Activated naive CD4-positive, alpha-beta T cell treated with anti-CD3 and anti-CD28 coated beads for 36 hours (primary cell): ENCODE measurements at regions of chrX and their contacts with region 1.

Region 1: GRCh38 chrX:119791438-119792231 is at the start of gene RPL39:
- DNase-seq: peak; percentile 82
- H3K4me3 Mint-ChIP-seq: peak within 1 kb of the TSS; percentile 86
- H3K27ac Mint-ChIP-seq: peak within 1 kb of the TSS; percentile 95
- H3K4me1 Mint-ChIP-seq: peaks cover 29% of the 10 kb centered on the region
- H3K27me3 Mint-ChIP-seq: no peaks in the 10 kb centered on the region
- total RNA-seq, gene RPL39: 3,049 to 3,109 TPM

Region 2: DNA sequence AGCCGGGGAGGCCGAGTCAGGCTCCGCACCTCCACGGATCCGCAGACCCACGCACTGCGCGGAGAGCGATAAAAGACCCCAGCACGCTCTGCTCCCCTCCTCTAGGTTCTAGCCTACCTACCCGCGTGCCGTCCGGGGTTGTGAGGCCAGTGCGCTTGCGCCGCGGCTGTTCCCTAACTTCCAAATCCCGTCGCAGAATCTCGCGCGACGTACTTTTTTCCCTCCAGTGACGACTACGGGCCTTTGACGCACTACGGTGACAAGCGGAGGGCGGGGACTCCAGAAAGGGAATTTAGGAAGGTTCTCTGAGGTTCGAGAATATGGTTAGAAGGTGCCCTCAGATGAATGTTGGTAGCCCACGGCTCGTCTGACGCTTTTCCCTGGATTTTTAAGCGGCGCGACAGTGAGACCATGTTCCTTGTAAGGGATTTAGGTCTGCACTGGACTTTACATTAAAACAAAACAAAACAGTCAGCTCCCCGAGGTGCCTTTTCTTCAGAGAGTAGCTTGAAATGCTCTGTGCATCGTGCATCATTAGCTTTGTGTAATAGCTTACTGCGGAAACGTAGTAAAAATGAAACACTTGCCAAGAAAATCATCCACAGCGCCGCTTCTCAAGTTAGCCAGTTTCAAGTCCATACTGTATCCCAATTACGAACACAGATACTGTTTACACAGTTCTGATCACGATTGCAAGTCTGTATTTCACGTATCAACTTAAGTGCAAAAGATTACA is 185.2 kb before region 1 on chrX and contains the start of gene NKRF:
- CTCF ChIA-PET with region 1: no interaction called
- intact Hi-C with region 1: loop called (anchors 2 kb)
- DNase-seq: peak; percentile 94
- H3K4me3 Mint-ChIP-seq: peak within 1 kb of the TSS; percentile 96
- H3K27ac Mint-ChIP-seq: peak within 1 kb of the TSS; percentile 93
- H3K4me1 Mint-ChIP-seq: peaks cover 39% of the 10 kb centered on the region
- H3K27me3 Mint-ChIP-seq: no peaks in the 10 kb centered on the region
- total RNA-seq, gene NKRF: 15.8 to 17.0 TPM

Region 3: GRCh38 chrX:119693040-119693995 is 98.3 kb before region 1 on chrX and contains the start of gene SEPTIN6:
- CTCF ChIA-PET with region 1: no interaction called
- intact Hi-C with region 1: loop called (anchors 2 kb)
- DNase-seq: peak; percentile 86
- H3K4me3 Mint-ChIP-seq: peak within 1 kb of the TSS; percentile 95
- H3K27ac Mint-ChIP-seq: peak within 1 kb of the TSS; percentile 100
- H3K4me1 Mint-ChIP-seq: peaks cover 10% of the 10 kb centered on the region
- H3K27me3 Mint-ChIP-seq: no peaks in the 10 kb centered on the region
- total RNA-seq, gene SEPTIN6: 137 to 143 TPM

Region 4: DNA sequence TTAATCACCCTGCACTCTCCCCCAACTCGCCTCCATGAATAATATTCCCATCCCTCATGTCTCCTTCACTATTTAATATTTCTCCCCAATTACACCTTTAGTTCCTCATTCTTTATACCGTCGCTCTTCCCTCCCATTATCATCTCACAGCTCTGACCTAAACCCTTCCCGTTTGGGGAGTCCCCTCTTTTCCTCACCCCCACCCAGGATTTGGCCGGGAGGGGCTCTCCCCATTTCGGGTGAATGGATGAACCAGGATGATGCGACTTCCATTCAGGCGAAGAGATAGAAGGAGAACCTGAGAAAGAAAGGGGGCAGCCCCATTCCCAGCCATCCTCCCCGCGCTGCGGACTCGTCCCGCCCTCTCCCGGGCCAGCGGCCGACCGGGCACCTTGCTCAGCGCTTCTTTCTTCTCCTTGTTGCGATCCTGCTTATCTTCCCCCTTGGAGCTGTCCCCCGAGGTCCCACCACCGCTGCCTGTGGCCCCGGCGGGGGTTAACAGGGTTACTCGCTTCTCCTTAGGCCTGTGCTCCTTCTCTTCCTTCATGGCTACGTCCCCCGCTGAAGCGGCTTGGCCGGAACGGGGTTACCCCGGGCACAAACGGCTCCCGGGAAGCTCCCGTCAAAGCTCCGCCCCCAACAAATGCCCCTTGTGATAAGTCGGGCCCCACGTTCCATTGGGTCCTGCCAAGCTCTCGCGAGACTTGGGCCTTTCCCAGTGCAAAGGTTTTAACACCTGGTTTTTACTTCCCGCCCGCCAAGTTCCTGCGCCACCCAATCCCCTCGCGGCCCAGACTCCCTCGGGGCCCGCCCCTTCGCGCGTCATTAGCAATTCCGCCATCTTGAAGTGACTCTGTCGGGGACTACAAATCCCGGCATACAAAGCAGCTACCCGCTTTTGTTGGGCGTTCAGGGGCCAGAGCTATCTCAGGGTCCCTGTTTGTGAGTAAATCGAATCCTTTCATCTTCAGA is 61.0 kb after region 1 on chrX and contains the start of gene UPF3B:
- CTCF ChIA-PET with region 1: interaction called, 4 read pairs
- intact Hi-C with region 1: loop called (anchors 1 kb)
- DNase-seq: peak; percentile 97
- H3K4me3 Mint-ChIP-seq: peak within 1 kb of the TSS; percentile 98
- H3K27ac Mint-ChIP-seq: peak within 1 kb of the TSS; percentile 97
- H3K4me1 Mint-ChIP-seq: peaks cover 8% of the 10 kb centered on the region
- H3K27me3 Mint-ChIP-seq: no peaks in the 10 kb centered on the region
- total RNA-seq, gene UPF3B: 21.5 to 22.2 TPM

Region 5: DNA sequence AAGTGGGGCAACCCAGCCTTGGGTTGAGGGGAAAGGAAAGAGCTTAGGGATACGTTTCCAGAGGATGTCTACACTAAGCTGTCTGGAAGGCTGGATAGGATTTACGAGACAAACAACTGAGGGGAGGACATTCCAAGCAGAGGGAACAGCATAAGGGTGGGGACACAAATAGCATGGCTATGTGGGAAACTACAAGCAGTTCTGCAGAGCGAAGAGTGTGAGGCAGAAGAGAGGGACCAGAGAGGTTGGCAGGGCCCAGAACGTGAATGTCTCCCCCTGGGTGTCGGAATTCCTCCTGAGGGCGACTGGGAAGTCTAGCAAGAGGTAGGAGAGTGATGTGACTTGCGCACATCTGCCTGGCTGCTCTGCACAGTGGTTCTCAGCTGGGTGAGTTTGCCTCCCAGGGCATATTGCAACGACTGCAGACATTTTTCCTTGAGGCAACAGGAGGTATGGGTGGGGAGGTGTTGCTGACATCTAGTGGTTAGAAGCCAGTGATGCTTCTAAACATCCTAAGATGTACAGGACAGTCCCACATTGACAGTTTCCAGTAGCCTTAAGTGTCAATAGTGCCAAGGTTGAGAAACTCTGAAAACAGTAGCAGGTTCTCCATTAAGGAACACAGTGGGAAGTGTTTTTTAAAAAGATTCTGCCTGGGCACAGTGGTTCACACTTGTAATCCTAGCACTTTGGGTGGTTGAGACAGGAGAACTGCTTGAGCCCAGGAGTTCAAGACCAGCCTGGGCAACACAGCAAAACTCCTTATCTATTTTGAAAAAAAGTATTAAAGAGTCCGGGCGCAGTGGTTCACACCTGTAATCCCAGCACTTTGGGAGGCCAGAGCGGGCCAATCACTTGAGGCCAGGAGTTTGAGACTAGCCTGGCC is 89.2 kb after region 1 on chrX:
- CTCF ChIA-PET with region 1: interaction called, 3 read pairs
- intact Hi-C with region 1: loop called (anchors 1 kb)
- DNase-seq: peak; percentile 41
- H3K4me3 Mint-ChIP-seq: no peak overlapping the region
- H3K27ac Mint-ChIP-seq: no peak overlapping the region
- H3K4me1 Mint-ChIP-seq: peaks cover 15% of the 10 kb centered on the region
- H3K27me3 Mint-ChIP-seq: no peaks in the 10 kb centered on the region

Region 6: GRCh38 chrX:119899125-119899524 is 107.5 kb after region 1 on chrX:
- CTCF ChIA-PET with region 1: no interaction called
- intact Hi-C with region 1: no loop called
- DNase-seq: no peak
- H3K4me3 Mint-ChIP-seq: no peak overlapping the region
- H3K27ac Mint-ChIP-seq: no peak overlapping the region
- H3K4me1 Mint-ChIP-seq: peaks cover 3% of the 10 kb centered on the region
- H3K27me3 Mint-ChIP-seq: no peaks in the 10 kb centered on the region